K562 (cell line): ENCODE measurements at regions of chr11 and their contacts with region 1.

Region 1: DNA sequence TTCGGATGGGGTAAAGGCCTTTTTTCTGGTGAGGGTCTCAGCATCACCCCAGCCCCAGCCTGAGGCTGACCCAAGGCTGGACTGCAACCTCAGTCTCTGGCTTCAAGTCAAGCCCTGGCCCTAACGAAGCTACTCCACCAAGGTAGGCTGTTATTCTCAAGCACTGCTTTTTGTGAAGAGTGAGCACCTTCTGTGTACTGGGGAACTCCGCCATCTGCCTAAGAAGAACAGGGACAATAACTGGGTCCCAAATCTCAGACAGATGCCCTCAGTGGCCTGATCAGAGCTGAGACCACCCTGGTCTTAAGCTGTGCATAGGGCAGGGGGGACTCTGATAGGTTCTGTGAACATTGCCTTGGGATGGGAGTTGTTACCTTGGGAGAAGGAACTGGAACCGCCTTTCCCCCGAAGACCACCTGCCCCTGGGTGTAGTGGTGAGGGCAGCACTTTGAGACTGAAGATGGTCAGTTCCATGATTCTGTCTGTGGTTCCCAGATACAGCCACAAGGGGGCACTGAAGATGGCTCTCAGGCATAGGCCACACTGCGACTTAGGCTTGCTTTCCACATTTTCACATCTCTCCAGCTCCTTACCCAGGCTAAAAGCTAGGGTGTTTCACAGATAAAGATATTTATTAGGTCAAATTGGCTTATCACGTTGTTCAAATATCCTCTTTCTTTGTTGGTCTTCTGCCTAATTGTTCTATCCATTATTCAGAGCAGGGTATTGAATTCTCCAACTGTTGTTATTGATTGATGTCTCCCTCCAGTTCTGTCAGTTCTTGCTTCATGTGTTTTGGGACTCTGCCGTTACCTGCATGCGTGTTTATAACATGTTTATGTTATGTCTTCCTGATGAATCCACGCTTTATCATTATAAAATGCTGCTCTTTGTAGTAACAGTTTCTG is 11.8 kb upstream of the UVRAG start:
- DNase-seq: peak; percentile 77 to 82 (median 80)
- ATAC-seq: peak; percentile 96
- H3K4me3 ChIP-seq: no peak overlapping the region
- H3K27ac ChIP-seq: no peak overlapping the region
- H3K4me1 ChIP-seq: 0 out of 5 replicates have a peak, but pooled peaks cover 0 to 3% of the 10 kb centered on the region in 2 experiments
- H3K27me3 ChIP-seq: no peaks in the 10 kb centered on the region
- CTCF ChIP-seq: peak; percentile 88 to 93 (median 88)
- EP300 ChIP-seq: no peak
- POLR2A ChIP-seq: no peak
- RAD21 ChIP-seq: peak; percentile 84 to 91

Region 2: DNA sequence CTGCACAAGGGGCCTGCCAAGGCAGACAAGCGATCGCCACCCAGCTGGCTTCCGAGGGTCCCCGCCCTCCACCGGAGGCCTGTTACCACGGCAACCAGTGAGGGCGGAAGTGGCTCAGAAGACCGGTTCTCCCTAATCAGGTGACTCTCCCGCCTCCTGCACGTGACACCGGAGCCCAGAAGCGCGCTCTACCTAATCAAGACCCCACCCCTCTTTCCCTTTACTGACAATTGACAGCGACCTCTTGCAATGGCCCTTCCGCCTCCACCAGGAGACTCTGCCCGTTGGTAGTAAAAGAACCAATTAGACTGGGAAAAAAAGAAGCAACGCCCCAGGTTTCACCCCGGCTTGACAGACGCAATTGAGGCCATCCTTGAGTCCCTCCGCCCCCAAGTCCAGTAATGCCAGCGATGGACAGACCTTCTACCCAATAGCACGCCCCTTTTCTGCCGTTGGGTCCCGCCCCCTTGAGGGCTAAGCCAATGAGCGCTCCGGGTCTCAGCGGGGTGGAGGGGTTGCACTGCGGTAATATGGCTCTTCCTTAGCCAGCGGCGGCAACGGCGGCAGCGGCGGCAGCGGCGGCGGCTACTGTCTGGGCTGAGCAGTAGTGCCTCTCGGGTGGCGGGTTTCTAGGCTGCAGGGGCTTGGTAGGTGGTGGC is 11.6 kb after region 1 on chr11 and contains the start of gene UVRAG:
- CTCF ChIA-PET with region 1: no interaction called
- POLR2A ChIA-PET with region 1: interaction called, 11 read pairs
- in situ Hi-C with region 1: no loop called
- intact Hi-C with region 1: no loop called
- DNase-seq: peak; percentile 98 to 100 (median 98)
- ATAC-seq: peak; percentile 96
- H3K4me3 ChIP-seq: peak within 1 kb of the TSS; percentile 87
- H3K27ac ChIP-seq: peak within 1 kb of the TSS; percentile 79
- H3K4me1 ChIP-seq: peaks cover 14 to 28% of the 10 kb centered on the region in 2 experiments
- H3K27me3 ChIP-seq: no peaks in the 10 kb centered on the region
- CTCF ChIP-seq: peak in 1 of 3 experiments; percentile 9; a peak in 1 of 6 replicates
- EP300 ChIP-seq: no peak; the same call in 1 of the 2 replicates
- POLR2A ChIP-seq: peak; percentile 87
- RAD21 ChIP-seq: no peak; a peak in 1 of 4 replicates
- polyA plus RNA-seq, gene UVRAG: 3.1 to 5.2 TPM

Region 3: DNA sequence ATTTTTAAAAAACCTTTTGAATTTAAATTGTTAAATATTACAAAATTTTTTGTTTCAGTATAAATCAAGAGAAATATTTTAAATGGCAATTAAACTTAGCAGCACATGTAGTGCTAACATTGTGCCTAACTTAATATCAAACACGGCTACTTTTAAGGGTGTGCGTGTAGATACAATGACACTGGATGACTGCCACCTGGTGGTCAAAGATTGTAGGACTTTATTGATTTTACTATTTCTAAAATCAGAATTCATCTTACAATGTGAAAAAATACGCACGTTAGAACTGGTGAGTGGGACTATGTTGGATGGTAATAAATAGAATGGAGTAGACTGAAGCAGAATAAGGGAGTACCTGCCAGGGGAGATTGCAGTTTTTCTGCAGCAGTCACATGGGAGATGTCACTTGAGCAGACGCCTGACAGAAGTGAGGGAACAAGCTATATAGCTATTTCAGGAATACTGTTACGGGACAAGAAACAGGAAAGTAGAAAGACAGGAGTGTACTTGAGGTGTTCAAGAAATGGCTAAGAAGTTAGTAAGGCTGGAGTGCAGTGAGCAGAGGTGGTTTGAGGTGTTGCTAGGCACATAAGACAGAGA is 64.7 kb after region 1 on chr11:
- CTCF ChIA-PET with region 1: interaction called, 61 read pairs
- POLR2A ChIA-PET with region 1: no interaction called
- in situ Hi-C with region 1: loop called (anchors 5 kb)
- intact Hi-C with region 1: loop called (anchors 1 kb)
- DNase-seq: peak; percentile 50 to 66 (median 57)
- ATAC-seq: peak; percentile 77
- H3K4me3 ChIP-seq: no peak overlapping the region
- H3K27ac ChIP-seq: no peak overlapping the region
- H3K4me1 ChIP-seq: no peaks in the 10 kb centered on the region
- H3K27me3 ChIP-seq: no peaks in the 10 kb centered on the region
- CTCF ChIP-seq: peak; percentile 60 to 84 (median 70); a peak in 5 of 6 replicates
- EP300 ChIP-seq: no peak
- POLR2A ChIP-seq: no peak
- RAD21 ChIP-seq: peak; percentile 77 to 84

Region 4: DNA sequence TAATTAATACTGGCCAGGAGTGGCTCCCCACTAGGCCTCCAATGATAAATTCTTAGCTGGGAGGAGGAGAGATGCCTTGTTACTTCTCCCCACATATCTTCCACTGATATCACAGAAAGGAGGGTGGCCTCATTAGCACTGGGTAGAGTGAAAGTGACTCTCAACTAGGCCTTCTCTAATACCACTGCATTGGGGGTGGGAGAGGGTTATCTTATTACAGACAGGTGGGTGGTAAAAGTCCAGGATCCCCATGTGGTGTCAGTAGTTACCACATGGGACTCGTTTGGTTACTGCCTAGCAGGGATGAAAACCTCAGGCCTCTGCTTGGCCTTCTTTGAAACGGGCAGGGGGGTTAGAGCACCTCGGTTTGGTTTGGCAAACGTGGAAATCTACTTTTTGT is 179.1 kb after region 1 on chr11:
- CTCF ChIA-PET with region 1: no interaction called
- POLR2A ChIA-PET with region 1: no interaction called
- in situ Hi-C with region 1: no loop called
- intact Hi-C with region 1: no loop called
- DNase-seq: peak; percentile 10 to 49 (median 30)
- ATAC-seq: peak; percentile 84
- H3K4me3 ChIP-seq: no peak overlapping the region
- H3K27ac ChIP-seq: no peak overlapping the region
- H3K4me1 ChIP-seq: peaks cover 5 to 7% of the 10 kb centered on the region in 2 experiments; a peak in 4 of 5 replicates
- H3K27me3 ChIP-seq: no peaks in the 10 kb centered on the region
- CTCF ChIP-seq: no peak
- EP300 ChIP-seq: no peak
- POLR2A ChIP-seq: no peak
- RAD21 ChIP-seq: no peak